Activated CD4-positive, alpha-beta T cell treated with anti-CD3 and anti-CD28 coated beads for 36 hours (primary cell): ENCODE measurements at regions of chr19 and their contacts with region 1.

Region 1: DNA sequence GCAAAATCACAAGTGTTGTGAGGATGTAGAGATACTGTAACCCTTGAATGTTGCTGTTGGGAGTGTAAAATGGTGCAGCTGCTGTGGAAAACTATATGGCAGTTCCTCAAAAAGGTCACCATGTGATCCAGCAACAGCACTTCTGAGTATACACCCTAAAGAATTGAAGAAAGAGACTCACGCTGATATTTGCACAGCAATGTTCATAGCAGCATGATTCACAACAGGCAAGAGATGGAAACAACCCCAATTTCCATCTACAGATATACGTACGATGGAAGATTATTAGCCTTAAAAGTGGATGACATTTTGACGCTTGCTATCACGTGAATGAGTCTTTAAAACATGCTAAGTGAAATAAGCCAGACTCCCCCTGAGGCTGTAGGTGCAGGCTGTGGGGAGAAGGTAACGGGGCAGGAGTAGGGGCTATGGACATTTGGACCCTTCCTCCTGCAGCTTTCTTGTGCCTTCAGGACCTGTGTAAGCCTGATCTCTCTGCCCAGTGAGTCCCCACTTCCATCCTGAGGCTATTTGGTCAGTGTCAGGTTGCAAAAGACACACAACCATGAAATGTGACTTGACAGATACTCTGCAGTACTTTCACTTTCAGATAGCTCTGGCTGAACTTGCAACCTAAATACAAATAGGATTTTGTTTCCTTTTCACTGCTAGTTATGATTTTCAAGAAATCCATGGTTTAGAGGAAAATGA is 17.6 kb upstream of the EID2 start:
- DNase-seq: no peak
- ATAC-seq: peak; percentile 48
- H3K4me3 Mint-ChIP-seq: peak overlapping the region; percentile 42
- H3K27ac Mint-ChIP-seq: peak overlapping the region; percentile 93
- H3K4me1 Mint-ChIP-seq: peaks cover 25% of the 10 kb centered on the region
- H3K27me3 Mint-ChIP-seq: no peaks in the 10 kb centered on the region

Region 2: GRCh38 chr19:39582891-39583625 is 25.5 kb after region 1 on chr19:
- CTCF ChIA-PET with region 1: interaction called, 3 read pairs
- POLR2A ChIA-PET with region 1: no interaction called
- intact Hi-C with region 1: loop called (anchors 1 to 2 kb)
- DNase-seq: peak; percentile 54
- ATAC-seq: peak; percentile 75
- H3K4me3 Mint-ChIP-seq: no peak overlapping the region
- H3K27ac Mint-ChIP-seq: no peak overlapping the region
- H3K4me1 Mint-ChIP-seq: no peaks in the 10 kb centered on the region
- H3K27me3 Mint-ChIP-seq: peaks cover 37% of the 10 kb centered on the region

Region 3: GRCh38 chr19:39631178-39631577 is 73.6 kb after region 1 on chr19:
- CTCF ChIA-PET with region 1: interaction called, 3 read pairs
- POLR2A ChIA-PET with region 1: no interaction called
- intact Hi-C with region 1: loop called in 1 of 2 experiments (anchors 5 kb)
- DNase-seq: no peak
- ATAC-seq: no peak
- H3K4me3 Mint-ChIP-seq: no peak overlapping the region
- H3K27ac Mint-ChIP-seq: no peak overlapping the region
- H3K4me1 Mint-ChIP-seq: peaks cover under 1% of the 10 kb centered on the region
- H3K27me3 Mint-ChIP-seq: peaks cover 25% of the 10 kb centered on the region

Region 4: DNA sequence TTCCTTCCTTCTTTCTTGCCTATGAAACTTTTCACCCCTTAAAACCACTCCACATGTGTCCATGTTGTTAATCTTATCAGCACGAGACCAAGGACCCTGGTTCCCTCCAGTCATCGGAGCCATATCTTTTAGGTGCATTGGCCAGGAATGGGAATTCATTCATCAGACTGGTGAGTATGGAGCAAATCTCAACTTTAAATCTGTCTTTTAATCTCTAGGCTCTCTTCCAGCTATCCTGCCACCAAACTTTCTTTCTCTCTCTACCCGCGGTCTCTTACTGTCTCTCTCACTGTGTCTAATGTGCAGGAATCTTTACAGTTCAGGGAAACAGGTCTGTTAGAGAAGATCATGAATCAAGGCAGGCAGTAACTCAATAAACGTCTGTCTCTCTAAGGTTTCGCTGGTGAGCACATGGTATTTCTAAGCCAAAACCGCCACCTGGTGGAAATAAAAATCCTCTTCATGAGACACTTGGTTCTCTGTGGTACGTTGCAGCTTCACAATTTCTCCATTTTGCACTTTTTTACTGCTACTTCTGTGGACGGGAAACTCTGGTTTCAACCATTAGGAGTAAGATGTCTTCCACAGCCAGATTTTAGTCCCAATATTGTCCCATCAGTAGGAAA is 114.3 kb after region 1 on chr19:
- CTCF ChIA-PET with region 1: interaction called, 88 read pairs
- POLR2A ChIA-PET with region 1: no interaction called
- intact Hi-C with region 1: no loop called
- DNase-seq: peak; percentile 64
- ATAC-seq: peak; percentile 67
- H3K4me3 Mint-ChIP-seq: no peak overlapping the region
- H3K27ac Mint-ChIP-seq: peak overlapping the region; percentile 45
- H3K4me1 Mint-ChIP-seq: peaks cover 27% of the 10 kb centered on the region
- H3K27me3 Mint-ChIP-seq: peaks cover 8% of the 10 kb centered on the region

Region 5: GRCh38 chr19:39765091-39766076 is 207.8 kb after region 1 on chr19:
- CTCF ChIA-PET with region 1: interaction called, 5 read pairs
- POLR2A ChIA-PET with region 1: no interaction called
- intact Hi-C with region 1: loop called in 1 of 2 experiments (anchors 10 kb)
- DNase-seq: peak; percentile 63
- ATAC-seq: no peak
- H3K4me3 Mint-ChIP-seq: no peak overlapping the region
- H3K27ac Mint-ChIP-seq: no peak overlapping the region
- H3K4me1 Mint-ChIP-seq: no peaks in the 10 kb centered on the region
- H3K27me3 Mint-ChIP-seq: peaks cover 21% of the 10 kb centered on the region